Activated T-helper 2 cell treated with anti-CD3 and anti-CD28 coated beads, Interferon-gamma antibody, Interleukin-2, Interleukin-4, amounts not matched to agents 10 μg/mL and 5 μg/mL and 100 μg/mL, durations not matched to agents 14 hours and 24 hours and 36 hours (primary cell): ENCODE measurements at regions of chr18 and their contacts with region 1.

Region 1: GRCh38 chr18:31648966-31649429 is 35.4 kb downstream of the B4GALT6 start:
- DNase-seq: no peak
- H3K4me3 Mint-ChIP-seq: no peak overlapping the region
- H3K27ac Mint-ChIP-seq: no peak overlapping the region
- H3K4me1 Mint-ChIP-seq: peaks cover 27% of the 10 kb centered on the region
- H3K27me3 Mint-ChIP-seq: peaks cover 25% of the 10 kb centered on the region

Region 2: GRCh38 chr18:31170335-31170734 is 478.7 kb before region 1 on chr18:
- intact Hi-C with region 1: no loop called
- DNase-seq: no peak
- H3K4me3 Mint-ChIP-seq: no peak overlapping the region
- H3K27ac Mint-ChIP-seq: no peak overlapping the region
- H3K4me1 Mint-ChIP-seq: no peaks in the 10 kb centered on the region
- H3K27me3 Mint-ChIP-seq: no peaks in the 10 kb centered on the region

Region 3: GRCh38 chr18:31321719-31322118 is 327.3 kb before region 1 on chr18:
- intact Hi-C with region 1: no loop called
- DNase-seq: no peak
- H3K4me3 Mint-ChIP-seq: no peak overlapping the region
- H3K27ac Mint-ChIP-seq: no peak overlapping the region
- H3K4me1 Mint-ChIP-seq: no peaks in the 10 kb centered on the region
- H3K27me3 Mint-ChIP-seq: no peaks in the 10 kb centered on the region

Region 4: DNA sequence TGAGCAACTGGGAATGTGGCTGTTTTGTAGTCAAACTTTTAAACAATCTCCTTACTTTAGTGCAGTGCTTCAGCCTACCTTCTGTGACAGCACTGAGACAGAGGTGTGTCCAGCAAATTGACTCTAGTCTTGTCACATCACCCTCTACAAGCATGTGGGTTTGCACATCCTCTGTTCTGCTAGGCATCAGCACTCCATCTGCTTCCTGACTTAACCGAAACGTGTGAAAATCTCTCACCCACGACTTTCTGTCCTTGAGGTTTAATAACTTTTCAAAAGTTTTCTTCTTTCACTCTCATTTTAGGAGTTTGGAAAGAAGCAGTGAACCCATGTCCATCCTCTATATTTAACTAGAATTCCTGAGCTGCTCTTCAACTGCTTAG is 14.7 kb before region 1 on chr18:
- intact Hi-C with region 1: loop called (anchors 2 kb)
- DNase-seq: no peak
- H3K4me3 Mint-ChIP-seq: no peak overlapping the region
- H3K27ac Mint-ChIP-seq: no peak overlapping the region
- H3K4me1 Mint-ChIP-seq: peaks cover 23% of the 10 kb centered on the region
- H3K27me3 Mint-ChIP-seq: peaks cover 8% of the 10 kb centered on the region

Region 5: GRCh38 chr18:31685097-31686082 is 36.4 kb after region 1 on chr18:
- intact Hi-C with region 1: loop called (anchors 5 kb)
- DNase-seq: peak; percentile 52
- H3K4me3 Mint-ChIP-seq: peak overlapping the region; percentile 82
- H3K27ac Mint-ChIP-seq: peak overlapping the region; percentile 66
- H3K4me1 Mint-ChIP-seq: peaks cover 23% of the 10 kb centered on the region
- H3K27me3 Mint-ChIP-seq: peaks cover 47% of the 10 kb centered on the region